ENCODE measurements at regions of chr9 and their contacts with region 1.

Region 1: DNA sequence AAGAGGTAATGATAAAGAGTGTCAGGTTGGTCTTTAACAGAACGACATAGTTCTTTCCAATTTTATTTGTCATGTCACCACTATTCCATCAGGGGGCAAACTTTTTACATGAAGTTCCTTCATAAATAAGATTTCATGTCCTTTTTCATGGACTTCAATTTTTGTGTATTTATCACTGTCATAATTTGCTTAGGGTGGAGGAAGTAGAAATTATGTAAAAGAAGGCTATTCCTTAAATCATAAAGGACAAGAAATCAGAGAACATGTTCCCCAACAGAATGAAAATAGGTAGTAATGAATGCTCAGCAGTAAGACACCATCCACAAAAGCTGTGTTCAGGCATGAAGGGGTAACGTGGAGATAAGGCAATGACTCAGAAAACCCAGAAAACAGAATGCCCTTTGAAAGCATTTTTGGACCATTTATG is 72.7 kb downstream of the ZFAND5 start:
- DNase-seq: peak; percentile 12
- H3K4me3 Mint-ChIP-seq: peak overlapping the region; percentile 50
- H3K27ac Mint-ChIP-seq: peak overlapping the region; percentile 97
- H3K4me1 Mint-ChIP-seq: peaks cover 33% of the 10 kb centered on the region
- H3K27me3 Mint-ChIP-seq: no peaks in the 10 kb centered on the region
- CTCF ChIP-seq: no peak

Region 2: DNA sequence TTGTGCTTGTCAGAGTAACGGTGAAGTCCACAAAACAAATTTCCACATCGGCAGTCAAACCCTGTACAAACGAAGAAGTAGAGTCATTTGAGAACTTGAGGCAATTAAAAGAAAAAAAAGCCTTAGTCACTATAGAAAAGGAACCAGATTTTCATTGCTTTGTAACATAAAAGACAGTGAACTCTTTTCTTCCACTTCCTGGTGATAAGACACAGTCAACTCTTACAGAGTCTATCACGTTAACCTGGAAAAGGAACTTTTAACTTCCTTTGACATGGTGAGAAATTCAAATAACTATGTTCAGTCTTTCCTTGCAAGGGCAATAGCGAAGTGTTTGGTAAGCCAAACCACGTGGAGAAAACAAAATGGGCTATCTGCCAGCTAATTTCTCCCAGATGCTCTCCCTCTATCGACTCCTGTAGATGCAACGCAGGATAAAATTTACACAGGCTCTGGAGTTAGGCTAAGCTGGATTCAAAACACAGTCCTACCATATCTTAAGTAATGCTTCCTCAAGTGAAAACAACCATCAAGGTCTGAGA is 63.8 kb after region 1 on chr9:
- CTCF ChIA-PET with region 1: no interaction called
- intact Hi-C with region 1: loop called (anchors 2 kb)
- DNase-seq: no peak
- H3K4me3 Mint-ChIP-seq: peak overlapping the region; percentile 24
- H3K27ac Mint-ChIP-seq: peak overlapping the region; percentile 63
- H3K4me1 Mint-ChIP-seq: peaks cover 50% of the 10 kb centered on the region
- H3K27me3 Mint-ChIP-seq: no peaks in the 10 kb centered on the region
- CTCF ChIP-seq: no peak

Region 3: DNA sequence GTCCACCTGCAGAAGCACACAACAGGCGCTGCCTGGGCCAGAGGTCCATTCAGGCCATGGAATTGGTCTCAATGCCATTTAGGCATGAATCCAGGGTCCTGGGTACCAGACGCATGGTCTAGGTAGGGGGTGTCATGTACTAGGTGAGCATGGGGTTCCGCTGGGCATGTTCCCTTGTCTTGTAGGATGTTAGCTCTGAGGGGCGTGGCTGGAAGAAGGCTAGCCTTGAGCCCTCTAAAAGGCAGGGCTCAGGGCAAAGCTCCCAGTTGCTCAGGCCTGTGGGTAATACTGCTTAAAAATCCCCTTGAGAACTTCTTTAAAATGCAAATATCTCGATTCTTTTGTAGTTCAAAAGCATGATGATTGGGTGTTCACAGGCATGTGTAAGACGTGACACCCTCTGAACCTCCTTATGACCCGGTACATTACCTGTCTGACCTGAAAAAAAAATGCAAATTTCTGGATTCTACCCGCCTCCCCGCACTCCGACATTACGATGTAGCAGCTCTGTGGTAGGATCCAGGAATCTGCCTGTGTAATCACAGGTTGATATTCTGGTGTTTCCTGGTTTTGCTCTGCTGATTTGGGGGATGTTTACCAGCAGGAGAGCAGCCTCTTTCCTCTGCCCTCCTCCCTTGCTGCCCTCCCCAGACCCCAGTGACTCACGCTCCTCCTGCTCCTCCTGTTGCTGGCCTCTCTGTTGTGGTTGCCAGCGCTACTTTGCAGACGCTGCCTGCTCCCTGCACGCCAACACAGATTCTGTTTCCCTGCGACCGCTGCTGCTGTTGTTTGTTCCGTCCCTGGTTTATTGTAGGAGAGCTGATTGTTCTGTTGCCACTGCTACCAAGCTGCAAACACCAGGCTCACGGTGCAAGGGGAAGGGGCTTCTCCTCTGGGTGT is 234.9 kb after region 1 on chr9:
- CTCF ChIA-PET with region 1: no interaction called
- intact Hi-C with region 1: loop called (anchors 5 kb)
- DNase-seq: peak; percentile 77
- H3K4me3 Mint-ChIP-seq: peak overlapping the region; percentile 49
- H3K27ac Mint-ChIP-seq: peak overlapping the region; percentile 70
- H3K4me1 Mint-ChIP-seq: peaks cover 27% of the 10 kb centered on the region
- H3K27me3 Mint-ChIP-seq: no peaks in the 10 kb centered on the region
- CTCF ChIP-seq: no peak

Region 4: DNA sequence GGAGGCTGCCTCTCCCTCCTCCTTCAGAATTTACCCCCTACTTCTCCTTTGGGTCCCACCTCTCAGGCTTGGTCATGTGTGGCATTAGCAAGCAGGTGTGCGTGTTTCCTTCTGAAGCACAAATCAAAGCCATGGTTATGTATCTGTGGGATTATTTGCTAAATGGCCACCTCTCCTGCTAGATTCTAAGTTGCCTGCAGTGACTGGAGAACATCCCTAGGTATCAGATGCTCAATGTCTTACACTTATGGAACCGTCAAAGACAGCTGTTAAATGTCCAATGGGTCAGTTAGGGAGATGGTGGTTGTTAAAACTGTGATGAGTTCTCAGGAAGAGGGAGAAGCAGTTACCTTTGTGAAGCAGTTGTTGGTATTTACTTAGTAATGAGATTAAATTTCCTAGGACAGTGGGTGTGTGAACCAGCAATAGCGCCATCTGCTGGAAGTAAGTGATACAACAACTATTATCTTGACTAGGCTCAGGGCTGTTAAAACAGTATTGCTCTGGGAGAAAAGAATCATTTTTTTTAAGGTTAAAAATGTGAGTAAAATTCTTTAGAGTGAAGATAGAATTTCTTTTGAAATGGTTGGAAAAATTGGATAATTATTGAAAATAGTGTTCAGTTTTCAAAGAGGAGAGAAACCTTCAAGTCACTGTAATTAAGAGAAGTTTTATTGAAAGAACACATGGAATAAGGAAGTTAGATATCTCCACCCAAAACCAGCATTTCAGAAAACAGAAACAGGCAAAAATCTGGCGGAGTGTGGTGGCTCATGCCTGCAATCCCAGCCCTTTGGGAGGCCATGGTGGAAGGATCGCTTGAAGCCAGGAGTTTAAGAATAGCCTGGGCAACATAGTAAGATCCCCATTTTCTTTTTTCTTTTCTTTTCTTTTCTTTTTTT is 300.5 kb after region 1 on chr9:
- CTCF ChIA-PET with region 1: interaction called, 4 read pairs
- intact Hi-C with region 1: loop called (anchors 2 kb)
- DNase-seq: peak; percentile 7
- H3K4me3 Mint-ChIP-seq: no peak overlapping the region
- H3K27ac Mint-ChIP-seq: no peak overlapping the region
- H3K4me1 Mint-ChIP-seq: peaks cover 30% of the 10 kb centered on the region
- H3K27me3 Mint-ChIP-seq: no peaks in the 10 kb centered on the region
- CTCF ChIP-seq: peak; percentile 43

Region 5: DNA sequence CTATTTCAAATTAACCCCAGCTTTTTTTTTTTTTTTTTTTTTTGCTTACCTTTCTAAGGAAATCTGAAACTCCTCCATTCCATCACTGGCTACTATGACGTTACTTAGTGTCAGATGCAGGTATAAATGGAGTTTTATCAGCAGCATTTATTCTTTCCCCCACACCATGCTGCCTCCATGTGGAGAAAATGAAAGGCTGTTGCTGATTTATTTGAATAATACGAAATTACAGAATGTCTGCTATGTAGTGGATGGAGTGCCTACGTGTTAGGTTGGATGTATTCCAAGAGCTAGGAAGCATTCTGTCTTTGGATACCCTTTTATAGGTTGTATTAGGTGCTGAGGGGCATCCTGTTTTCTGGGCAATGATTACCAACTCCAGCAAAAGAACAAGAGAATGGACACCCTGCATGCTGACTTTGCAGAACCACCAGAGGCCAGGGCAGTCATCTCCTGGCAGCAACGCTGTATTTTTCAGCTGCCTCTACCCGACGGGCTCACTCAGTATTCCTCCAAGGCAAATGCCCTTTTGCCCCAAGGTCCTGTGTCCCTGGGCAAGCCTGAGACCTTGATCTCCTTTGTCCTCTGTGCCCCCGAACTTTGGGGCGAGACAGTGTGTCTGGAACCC is 461.1 kb after region 1 on chr9:
- CTCF ChIA-PET with region 1: no interaction called
- intact Hi-C with region 1: loop called (anchors 5 kb)
- DNase-seq: peak; percentile 17
- H3K4me3 Mint-ChIP-seq: no peak overlapping the region
- H3K27ac Mint-ChIP-seq: no peak overlapping the region
- H3K4me1 Mint-ChIP-seq: peaks cover 12% of the 10 kb centered on the region
- H3K27me3 Mint-ChIP-seq: no peaks in the 10 kb centered on the region
- CTCF ChIP-seq: no peak